ENCODE measurements at regions of chr5 and their contacts with region 1.

Region 1: GRCh38 chr5:82031220-82032119 is 59.6 kb downstream of the ATG10 start:
- DNase-seq: no peak
- ATAC-seq: no peak
- H3K4me3 ChIP-seq: no peak overlapping the region
- H3K4me3 Mint-ChIP-seq: no peak overlapping the region
- H3K27ac ChIP-seq: no peak overlapping the region
- H3K27ac Mint-ChIP-seq: peak overlapping the region in 3 of 9 donors; percentile 26 to 71 (median 39)
- H3K4me1 ChIP-seq: no peaks in the 10 kb centered on the region
- H3K4me1 Mint-ChIP-seq: peaks cover 0 to 14% (median 3%) of the 10 kb centered on the region in 7 donors
- H3K27me3 ChIP-seq: no peaks in the 10 kb centered on the region
- H3K27me3 Mint-ChIP-seq: no peaks in the 10 kb centered on the region

Region 2: DNA sequence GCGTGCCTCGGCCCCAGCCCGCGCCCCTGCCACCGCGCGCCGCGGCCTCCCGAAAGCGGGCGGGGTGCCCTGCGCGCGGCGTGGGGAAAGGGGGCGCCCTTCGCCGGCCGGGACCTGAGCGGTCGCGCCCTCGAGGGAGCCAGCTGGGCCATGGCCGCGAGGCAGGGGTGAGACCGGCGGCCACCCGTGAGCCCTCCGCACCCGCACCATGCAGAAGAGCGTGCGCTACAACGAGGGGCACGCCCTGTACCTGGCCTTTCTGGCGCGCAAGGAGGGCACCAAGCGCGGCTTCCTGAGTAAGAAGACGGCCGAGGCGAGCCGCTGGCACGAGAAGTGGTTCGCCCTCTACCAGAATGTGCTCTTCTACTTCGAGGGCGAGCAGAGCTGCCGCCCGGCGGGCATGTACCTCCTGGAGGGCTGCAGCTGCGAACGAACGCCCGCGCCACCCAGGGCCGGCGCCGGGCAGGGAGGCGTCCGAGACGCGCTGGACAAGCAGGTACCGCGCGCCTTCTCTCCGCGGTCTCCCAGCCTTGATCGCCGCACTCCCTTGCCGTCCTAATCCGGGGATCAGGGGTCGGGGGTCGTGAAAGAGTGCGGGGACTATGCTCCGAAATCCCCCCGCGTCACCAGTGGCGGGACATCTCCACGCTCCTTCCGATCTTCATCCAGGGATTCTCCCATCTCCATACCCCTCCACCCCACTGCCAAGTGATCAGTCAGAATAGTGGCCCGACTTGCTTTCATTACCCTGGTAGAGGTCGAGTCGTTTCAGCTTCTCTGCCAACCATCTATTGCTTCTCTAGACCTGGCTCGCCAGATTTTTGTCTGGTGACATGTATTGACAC is 1070.7 kb before region 1 on chr5:
- CTCF ChIA-PET with region 1: no interaction called
- POLR2A ChIA-PET with region 1: no interaction called
- intact Hi-C with region 1: no loop called
- DNase-seq: peak in 8 of 9 donors; percentile 23 to 67 (median 50)
- ATAC-seq: peak; percentile 53
- H3K4me3 ChIP-seq: peak overlapping the region; percentile 85
- H3K4me3 Mint-ChIP-seq: peak overlapping the region; percentile 87 to 99 (median 94)
- H3K27ac ChIP-seq: peak overlapping the region; percentile 70
- H3K27ac Mint-ChIP-seq: peak overlapping the region; percentile 79 to 98 (median 88)
- H3K4me1 ChIP-seq: peaks cover 22 to 35% of the 10 kb centered on the region in 2 donors
- H3K4me1 Mint-ChIP-seq: peaks cover 35 to 76% (median 63%) of the 10 kb centered on the region in 7 donors
- H3K27me3 ChIP-seq: no peaks in the 10 kb centered on the region
- H3K27me3 Mint-ChIP-seq: peaks cover 0 to 12% (median 5%) of the 10 kb centered on the region in 5 donors

Region 3: DNA sequence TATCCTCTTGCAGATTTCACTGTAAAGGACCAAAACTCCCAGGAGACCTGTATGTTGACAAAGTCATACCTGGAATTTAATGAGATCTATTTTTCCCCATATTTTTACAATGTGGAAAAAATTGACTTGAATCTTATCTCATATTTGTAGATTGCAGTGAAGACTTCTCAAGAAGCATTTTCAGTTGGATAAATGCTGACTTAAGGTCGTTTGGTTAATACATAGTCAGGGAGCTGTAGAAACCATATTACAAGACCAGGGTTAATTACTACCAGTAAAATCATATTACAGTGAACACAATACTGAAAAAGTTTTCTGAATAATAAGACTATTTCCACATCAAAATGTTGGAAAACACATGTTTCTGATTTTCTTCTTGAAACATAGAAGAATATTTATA is 60.1 kb after region 1 on chr5:
- CTCF ChIA-PET with region 1: no interaction called
- POLR2A ChIA-PET with region 1: no interaction called
- intact Hi-C with region 1: loop called in 1 of 2 experiments (anchors 5 kb)
- DNase-seq: no peak
- ATAC-seq: no peak
- H3K4me3 ChIP-seq: no peak overlapping the region
- H3K4me3 Mint-ChIP-seq: no peak overlapping the region
- H3K27ac ChIP-seq: no peak overlapping the region
- H3K27ac Mint-ChIP-seq: no peak overlapping the region
- H3K4me1 ChIP-seq: no peaks in the 10 kb centered on the region
- H3K4me1 Mint-ChIP-seq: peaks cover 0 to 4% (median 0%) of the 10 kb centered on the region in 7 donors
- H3K27me3 ChIP-seq: no peaks in the 10 kb centered on the region
- H3K27me3 Mint-ChIP-seq: no peaks in the 10 kb centered on the region